GM10248 (cell line): ENCODE measurements at regions of chr3 and their contacts with region 1.

Region 1: GRCh38 chr3:30199096-30199759 is 407.2 kb upstream of the TGFBR2 start:
- DNase-seq: peak; percentile 28
- CTCF ChIP-seq: peak; percentile 78

Region 2: DNA sequence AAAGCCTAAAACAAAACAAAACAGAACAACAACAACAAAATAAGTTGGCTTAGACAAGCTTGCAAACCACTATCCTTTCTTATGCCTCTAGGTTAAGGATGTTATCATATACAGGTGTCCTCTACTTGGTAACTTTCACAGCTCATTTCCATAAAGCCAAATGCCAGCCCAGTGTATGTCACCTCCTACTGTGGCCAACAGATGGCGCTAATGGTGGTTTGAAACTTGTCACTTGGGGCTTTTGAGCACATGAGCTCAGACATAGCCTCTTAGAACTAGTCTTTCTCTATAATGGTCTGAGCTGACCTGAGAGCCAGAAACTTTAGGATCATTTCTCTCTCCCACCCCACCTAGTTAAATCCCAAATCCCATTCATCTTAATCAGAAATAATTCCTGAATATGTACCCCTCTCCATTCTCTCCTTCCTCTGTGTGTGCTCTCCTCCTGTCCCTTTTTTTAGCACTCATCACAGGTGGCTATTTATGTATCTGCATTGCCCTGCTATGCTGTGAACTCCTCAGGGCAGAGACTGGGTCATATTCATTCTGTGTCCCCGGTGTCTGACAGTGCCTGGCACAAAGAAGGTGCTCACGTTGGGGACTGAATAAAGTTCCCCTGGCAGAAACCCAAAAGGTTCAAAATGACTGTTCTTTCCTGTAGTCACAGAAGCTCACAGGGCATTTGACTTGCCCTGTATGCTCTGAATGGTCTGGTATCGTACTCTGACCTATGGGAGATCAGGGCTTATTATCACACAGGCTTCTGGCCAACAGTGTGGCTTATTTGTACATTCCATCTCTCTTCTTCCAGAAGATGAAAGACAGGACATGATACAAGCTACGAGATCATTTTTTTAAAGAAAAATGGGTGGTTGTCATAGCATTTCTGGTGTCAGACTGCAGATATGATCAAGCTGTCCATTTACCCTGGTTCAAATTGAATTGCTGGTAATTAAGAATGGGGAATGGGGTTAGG is 1531.3 kb before region 1 on chr3:
- CTCF ChIA-PET with region 1: interaction called, 43 read pairs
- POLR2A ChIA-PET with region 1: no interaction called
- DNase-seq: peak; percentile 41
- CTCF ChIP-seq: peak; percentile 86

Region 3: DNA sequence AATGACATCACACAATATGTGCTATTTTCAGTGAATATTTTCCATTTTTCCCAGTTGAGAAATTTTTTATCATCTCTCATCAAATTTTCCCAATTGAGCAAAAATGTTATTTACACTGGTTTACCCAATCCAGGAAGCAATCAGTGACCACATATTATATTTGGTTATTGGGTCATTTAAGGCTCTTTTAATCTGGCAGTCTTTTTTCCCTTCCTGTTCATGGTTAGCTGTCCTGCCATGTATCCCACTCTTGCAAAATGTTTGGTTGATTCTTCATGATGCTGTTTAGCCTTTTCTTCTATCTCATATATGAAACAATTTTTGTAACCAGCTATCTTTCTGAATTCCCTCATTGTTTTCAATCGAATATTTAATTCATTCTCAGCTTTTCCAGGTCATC is 292.3 kb before region 1 on chr3:
- CTCF ChIA-PET with region 1: no interaction called
- POLR2A ChIA-PET with region 1: no interaction called
- DNase-seq: no peak
- CTCF ChIP-seq: no peak

Region 4: DNA sequence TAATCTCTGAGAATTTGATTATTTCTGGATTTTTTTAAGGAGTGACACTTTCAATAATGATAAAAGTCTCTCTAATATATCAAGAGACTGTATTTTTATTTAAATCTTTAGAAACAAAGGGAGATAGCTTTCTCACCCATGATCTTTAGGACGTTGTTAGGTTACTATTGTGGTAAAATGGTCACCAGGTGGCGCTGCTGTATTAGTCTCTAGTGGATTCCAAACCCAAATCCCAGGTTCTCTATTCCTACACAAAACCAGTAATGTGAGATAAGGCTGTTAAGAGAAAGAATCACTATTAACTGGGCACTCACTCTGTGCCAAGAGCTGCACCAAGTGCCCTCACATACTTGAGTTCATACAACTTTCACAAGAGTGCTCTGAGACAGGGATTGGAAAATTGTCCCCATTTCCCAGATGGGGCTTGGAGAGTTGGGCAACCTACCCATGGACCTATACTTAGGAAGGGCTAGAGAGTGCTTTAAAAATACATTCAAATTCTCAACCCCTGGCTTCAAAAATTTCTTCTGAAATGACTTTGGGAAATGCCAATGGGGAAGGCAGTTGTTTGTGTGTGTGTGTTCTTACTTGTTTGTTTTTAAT is 186.2 kb before region 1 on chr3:
- CTCF ChIA-PET with region 1: interaction called, 45 read pairs
- POLR2A ChIA-PET with region 1: no interaction called
- DNase-seq: peak; percentile 18
- CTCF ChIP-seq: peak; percentile 60

Region 5: GRCh38 chr3:30150967-30151366 is 48.3 kb before region 1 on chr3:
- CTCF ChIA-PET with region 1: interaction called, 13 read pairs
- POLR2A ChIA-PET with region 1: no interaction called
- DNase-seq: no peak
- CTCF ChIP-seq: no peak

Region 6: GRCh38 chr3:30188713-30189112 is 10.5 kb before region 1 on chr3:
- CTCF ChIA-PET with region 1: interaction called, 20 read pairs
- POLR2A ChIA-PET with region 1: no interaction called
- DNase-seq: no peak
- CTCF ChIP-seq: no peak